Sciatic nerve (tissue), 2 donors: ENCODE measurements at regions of chr18 and their contacts with region 1.

Region 1: GRCh38 chr18:4293337-4293736 is 161.8 kb downstream of the DLGAP1 start:
- DNase-seq: no peak
- ATAC-seq: no peak

Region 2: DNA sequence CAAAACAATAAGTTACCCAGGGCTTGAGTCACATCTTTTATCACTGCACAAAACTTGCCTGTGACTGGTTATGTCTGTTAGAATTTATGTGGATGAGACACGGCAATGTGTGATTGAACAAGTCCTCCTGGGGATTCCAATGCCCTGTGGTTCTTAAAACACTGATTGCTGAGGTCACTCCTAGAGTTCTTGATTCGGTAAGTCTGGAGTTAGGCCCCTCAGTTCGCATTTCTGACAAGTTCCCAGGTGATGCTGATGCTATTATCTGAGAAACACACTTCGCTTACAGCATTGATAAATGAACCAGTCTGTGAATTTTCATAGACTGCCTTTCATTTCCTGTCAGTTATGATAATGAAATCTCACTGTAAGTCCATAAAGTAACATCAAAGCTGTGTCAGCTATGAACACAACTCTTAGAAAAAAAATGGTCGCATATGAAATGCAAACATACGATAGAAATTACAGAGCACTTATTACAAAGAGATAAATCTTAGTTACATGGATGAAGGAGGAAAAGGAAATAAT is 52.2 kb before region 1 on chr18:
- intact Hi-C with region 1: loop called (anchors 1 kb)
- DNase-seq: no peak
- ATAC-seq: no peak